Activated naive CD8-positive, alpha-beta T cell treated with anti-CD3 and anti-CD28 coated beads, Interleukin-2, amount 10 ng/mL, durations not matched to agents 7 days and 5 days (primary cell): ENCODE measurements at regions of chr17 and their contacts with region 1.

Region 1: GRCh38 chr17:63549946-63550807 is at the start of gene DCAF7:
- DNase-seq: peak; percentile 96
- ATAC-seq: peak; percentile 95
- H3K4me3 Mint-ChIP-seq: peak within 1 kb of the TSS; percentile 90
- H3K27ac Mint-ChIP-seq: peak within 1 kb of the TSS; percentile 97
- H3K4me1 Mint-ChIP-seq: peaks cover 19% of the 10 kb centered on the region
- H3K27me3 Mint-ChIP-seq: no peaks in the 10 kb centered on the region
- total RNA-seq, gene DCAF7: 113 TPM

Region 2: DNA sequence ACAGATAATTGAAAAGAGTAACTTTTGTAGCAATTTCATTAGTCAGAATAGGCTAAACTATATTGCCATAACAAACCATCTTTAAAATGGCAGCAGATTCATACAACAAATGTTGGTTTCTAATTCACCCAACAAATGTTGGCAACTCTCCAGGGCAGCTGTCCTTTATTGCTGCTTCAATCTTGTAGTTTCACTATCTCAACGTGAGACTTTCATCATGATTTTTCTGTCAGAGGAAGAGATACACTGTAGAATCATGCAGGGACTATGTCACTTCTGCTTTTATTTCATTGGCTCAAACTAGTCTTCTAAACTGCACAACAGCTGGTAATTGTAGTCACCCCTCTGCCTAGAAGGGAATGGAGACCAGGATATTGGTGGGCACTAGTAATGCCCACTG is 409.9 kb before region 1 on chr17:
- POLR2A ChIA-PET with region 1: no interaction called
- DNase-seq: no peak
- ATAC-seq: no peak
- H3K4me3 Mint-ChIP-seq: no peak overlapping the region
- H3K27ac Mint-ChIP-seq: no peak overlapping the region
- H3K4me1 Mint-ChIP-seq: peaks cover 4% of the 10 kb centered on the region
- H3K27me3 Mint-ChIP-seq: no peaks in the 10 kb centered on the region

Region 3: DNA sequence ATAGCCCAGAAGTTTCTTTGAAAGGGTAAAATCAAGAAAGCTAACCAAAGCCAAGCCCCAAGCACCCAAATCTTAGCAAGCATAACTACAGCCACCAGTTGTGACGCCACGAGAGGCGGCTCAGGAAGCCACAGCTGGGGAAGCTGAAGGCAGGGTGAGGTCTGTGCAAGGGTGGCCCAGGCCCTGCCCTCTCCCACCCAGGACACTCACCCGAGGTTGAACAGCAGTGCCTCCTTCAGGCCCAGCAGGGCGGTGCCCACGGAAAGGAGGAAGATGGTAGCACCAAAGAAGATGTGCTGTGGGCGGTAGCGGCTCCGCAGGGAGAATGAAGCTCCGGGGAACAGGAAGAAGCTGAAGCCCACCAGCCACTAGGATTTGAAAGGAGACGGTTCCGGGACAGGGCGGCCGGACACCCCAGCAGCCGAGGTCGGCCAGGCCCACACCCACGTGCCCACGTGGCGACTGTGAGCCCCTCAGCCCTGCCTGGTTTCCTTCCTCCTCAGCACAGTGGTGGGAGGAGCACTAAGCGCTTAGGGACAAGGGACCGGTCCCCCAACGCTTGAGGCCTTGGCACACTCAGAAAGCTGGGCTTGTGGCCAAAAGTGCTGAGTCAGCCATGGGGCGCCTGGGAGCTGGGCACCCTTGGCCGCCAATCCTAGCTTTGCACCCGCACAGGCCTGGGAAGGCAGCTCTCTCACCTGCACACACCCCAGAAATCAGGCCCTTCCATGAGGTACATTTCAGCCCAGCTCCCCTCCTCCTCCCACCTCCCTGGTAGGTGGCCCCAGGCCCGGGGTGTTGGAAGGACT is 115.1 kb before region 1 on chr17:
- POLR2A ChIA-PET with region 1: no interaction called
- DNase-seq: peak; percentile 68
- ATAC-seq: peak; percentile 93
- H3K4me3 Mint-ChIP-seq: peak overlapping the region; percentile 49
- H3K27ac Mint-ChIP-seq: peak overlapping the region; percentile 90
- H3K4me1 Mint-ChIP-seq: peaks cover 34% of the 10 kb centered on the region
- H3K27me3 Mint-ChIP-seq: no peaks in the 10 kb centered on the region

Region 4: GRCh38 chr17:63578027-63578768 is 28.0 kb after region 1 on chr17:
- POLR2A ChIA-PET with region 1: no interaction called
- DNase-seq: no peak
- ATAC-seq: no peak
- H3K4me3 Mint-ChIP-seq: no peak overlapping the region
- H3K27ac Mint-ChIP-seq: no peak overlapping the region
- H3K4me1 Mint-ChIP-seq: peaks cover 5% of the 10 kb centered on the region
- H3K27me3 Mint-ChIP-seq: no peaks in the 10 kb centered on the region

Region 5: DNA sequence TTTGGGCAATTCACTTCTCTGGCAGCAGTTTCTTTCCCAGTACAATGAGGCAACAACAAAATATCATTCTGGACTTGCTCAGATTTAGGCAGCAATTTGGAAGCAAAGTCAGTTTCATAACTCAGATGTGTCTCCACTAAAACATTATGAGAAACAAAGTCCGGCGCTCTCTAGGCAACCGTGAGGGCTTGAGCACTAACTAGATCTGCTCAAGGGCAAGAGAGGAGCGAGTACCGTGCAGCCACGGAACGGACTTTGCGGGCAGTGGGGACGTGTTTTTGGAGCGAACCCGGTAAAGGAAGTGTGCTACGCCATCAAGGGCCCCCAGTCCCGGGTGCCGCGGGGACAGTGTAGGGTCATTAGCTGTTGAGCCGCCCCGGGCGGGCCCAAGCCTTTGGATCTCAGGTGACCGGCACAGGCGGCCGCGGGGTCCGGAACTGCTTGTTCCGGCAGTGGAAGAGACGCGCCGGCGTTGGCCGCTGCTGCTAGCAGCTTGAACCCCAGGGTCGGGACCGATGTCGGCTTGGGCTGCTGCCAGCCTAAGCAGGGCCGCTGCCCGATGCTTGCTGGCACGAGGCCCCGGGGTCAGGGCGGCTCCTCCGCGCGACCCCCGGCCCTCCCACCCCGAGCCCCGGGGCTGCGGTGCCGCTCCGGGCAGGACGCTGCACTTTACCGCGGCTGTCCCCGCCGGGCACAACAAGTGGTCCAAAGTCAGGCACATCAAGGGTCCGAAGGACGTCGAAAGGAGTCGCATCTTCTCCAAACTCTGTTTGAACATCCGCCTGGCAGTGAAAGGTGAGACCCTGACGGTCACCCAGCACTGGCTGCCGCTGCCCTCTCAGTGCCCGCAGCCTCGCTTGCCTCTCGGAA is 50.6 kb after region 1 on chr17 and contains the start of gene TACO1:
- POLR2A ChIA-PET with region 1: interaction called, 15 read pairs
- DNase-seq: peak; percentile 86
- ATAC-seq: peak; percentile 89
- H3K4me3 Mint-ChIP-seq: peak within 1 kb of the TSS; percentile 98
- H3K27ac Mint-ChIP-seq: peak within 1 kb of the TSS; percentile 96
- H3K4me1 Mint-ChIP-seq: peaks cover 26% of the 10 kb centered on the region
- H3K27me3 Mint-ChIP-seq: no peaks in the 10 kb centered on the region
- total RNA-seq, gene TACO1: 19.3 to 24.8 TPM

Region 6: DNA sequence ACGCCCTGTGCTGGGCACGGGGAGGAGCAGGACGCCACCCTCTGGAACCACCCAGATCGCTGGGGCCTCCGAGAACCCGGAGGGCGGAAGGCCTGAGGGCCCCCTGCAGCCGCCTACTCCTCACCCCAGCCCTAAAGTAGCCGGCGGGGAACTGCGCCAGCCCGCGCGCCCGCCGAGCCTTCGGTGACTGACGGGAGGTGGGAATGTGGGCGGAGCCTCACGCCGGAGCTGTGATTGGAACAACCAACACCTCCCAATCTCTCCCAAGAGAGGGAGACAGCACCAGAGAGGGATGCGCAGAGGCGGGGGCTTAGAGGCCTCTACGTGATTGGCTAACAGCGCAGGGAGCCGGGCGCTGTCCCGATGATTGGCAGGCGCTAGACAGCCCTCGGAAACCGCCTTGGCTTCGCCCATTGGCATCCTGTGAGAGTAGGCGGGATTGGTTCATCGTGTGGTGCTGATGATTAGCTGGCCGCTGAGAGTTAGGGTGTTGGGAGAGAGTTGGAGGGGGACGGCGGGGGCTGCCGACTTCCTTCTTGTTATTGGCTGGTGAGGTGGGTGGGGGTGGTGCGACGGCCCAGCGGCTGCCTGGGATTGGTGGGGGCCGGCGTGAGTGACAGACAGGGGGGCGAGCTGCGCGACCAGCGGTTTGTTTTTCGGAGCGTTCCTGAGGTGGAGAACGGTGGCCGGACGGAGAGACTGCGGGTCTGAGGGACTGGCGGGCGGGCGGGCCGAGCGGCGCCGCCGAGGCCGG is 71.8 kb after region 1 on chr17 and contains the start of gene MAP3K3:
- POLR2A ChIA-PET with region 1: interaction called, 15 read pairs
- DNase-seq: peak; percentile 90
- ATAC-seq: peak; percentile 93
- H3K4me3 Mint-ChIP-seq: peak within 1 kb of the TSS; percentile 99
- H3K27ac Mint-ChIP-seq: peak within 1 kb of the TSS; percentile 97
- H3K4me1 Mint-ChIP-seq: peaks cover 29% of the 10 kb centered on the region
- H3K27me3 Mint-ChIP-seq: peaks cover 8% of the 10 kb centered on the region
- total RNA-seq, gene MAP3K3: 49.0 to 51.2 TPM

Region 7: GRCh38 chr17:63665527-63666214 is 115.5 kb after region 1 on chr17:
- POLR2A ChIA-PET with region 1: no interaction called
- DNase-seq: no peak
- ATAC-seq: peak; percentile 46
- H3K4me3 Mint-ChIP-seq: peak overlapping the region; percentile 13
- H3K27ac Mint-ChIP-seq: peak overlapping the region; percentile 75
- H3K4me1 Mint-ChIP-seq: peaks cover 25% of the 10 kb centered on the region
- H3K27me3 Mint-ChIP-seq: no peaks in the 10 kb centered on the region